Heart left ventricle (tissue), 16 donors: ENCODE measurements at regions of chr17 and their contacts with region 1.

Region 1: GRCh38 chr17:17119533-17119932 is 77.3 kb downstream of the MPRIP start:
- DNase-seq: peak in 2 of 5 donors; percentile 35 to 69
- ATAC-seq: peak; percentile 2 to 47 (median 28)
- H3K4me3 ChIP-seq: no peak overlapping the region
- H3K27ac ChIP-seq: peak overlapping the region; percentile 44 to 85 (median 70)
- H3K4me1 ChIP-seq: peaks cover 12 to 92% (median 75%) of the 10 kb centered on the region in 12 donors
- H3K27me3 ChIP-seq: no peaks in the 10 kb centered on the region
- CTCF ChIP-seq: no peak
- POLR2A ChIP-seq: no peak

Region 2: DNA sequence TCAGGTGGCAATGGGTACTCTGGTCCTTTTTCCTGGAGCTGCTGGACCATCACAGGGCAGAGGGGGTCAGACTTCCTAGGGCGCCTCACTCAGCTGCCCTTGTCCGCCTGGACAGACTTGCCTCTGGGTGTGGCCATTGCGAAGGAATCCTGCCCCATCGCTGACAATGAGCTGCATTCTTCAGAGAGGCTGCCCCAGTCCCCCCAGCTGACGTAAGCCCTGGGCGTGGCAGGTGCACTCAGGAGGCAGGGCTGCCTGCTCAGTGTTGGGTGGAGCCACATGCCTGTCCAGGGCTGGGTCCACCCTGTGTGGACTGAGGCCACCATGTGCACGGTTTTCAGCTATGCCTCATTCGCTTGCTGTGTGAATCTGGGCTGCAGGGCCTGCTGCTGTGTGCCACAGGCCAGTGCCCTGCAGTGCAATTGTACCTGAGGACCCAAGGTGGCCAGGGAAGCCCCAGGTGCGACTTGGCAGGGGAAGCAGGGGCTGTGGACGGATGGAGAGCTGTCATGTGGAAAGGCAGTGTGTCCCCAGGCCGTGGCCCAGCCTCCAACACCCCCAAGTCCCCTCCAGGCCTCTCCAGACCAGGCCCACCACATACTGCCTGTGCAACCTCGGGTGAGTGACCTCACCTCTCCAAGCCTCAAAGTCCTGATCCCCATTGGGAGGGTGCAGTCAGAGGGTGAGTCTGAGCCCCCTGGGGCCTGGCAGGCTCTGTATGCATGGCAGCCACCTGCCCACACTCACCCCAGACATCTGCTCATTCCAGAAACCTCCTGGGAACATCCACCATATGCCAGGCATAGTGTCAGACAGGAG is 91.3 kb before region 1 on chr17:
- intact Hi-C with region 1: loop called in 2 of 10 experiments (anchors 5 kb)
- DNase-seq: peak in 3 of 5 donors; percentile 57 to 86 (median 79)
- ATAC-seq: peak; percentile 31 to 80 (median 74)
- H3K4me3 ChIP-seq: no peak overlapping the region
- H3K27ac ChIP-seq: no peak overlapping the region
- H3K4me1 ChIP-seq: peaks cover 0 to 46% (median 22%) of the 10 kb centered on the region in 12 donors
- H3K27me3 ChIP-seq: no peaks in the 10 kb centered on the region
- CTCF ChIP-seq: no peak
- POLR2A ChIP-seq: no peak

Region 3: GRCh38 chr17:17051791-17052461 is 67.6 kb before region 1 on chr17:
- intact Hi-C with region 1: loop called in 1 of 10 experiments (anchors 10 kb)
- DNase-seq: peak in 2 of 5 donors; percentile 47 to 63
- ATAC-seq: peak; percentile 19 to 57 (median 36)
- H3K4me3 ChIP-seq: peak overlapping the region in 2 of 12 donors; percentile 4 to 13
- H3K27ac ChIP-seq: peak overlapping the region; percentile 13 to 86 (median 64)
- H3K4me1 ChIP-seq: peaks cover 30 to 100% (median 89%) of the 10 kb centered on the region in 12 donors
- H3K27me3 ChIP-seq: no peaks in the 10 kb centered on the region
- CTCF ChIP-seq: no peak
- POLR2A ChIP-seq: no peak